ENCODE measurements at regions of chr16 and their contacts with region 1.

Region 1: DNA sequence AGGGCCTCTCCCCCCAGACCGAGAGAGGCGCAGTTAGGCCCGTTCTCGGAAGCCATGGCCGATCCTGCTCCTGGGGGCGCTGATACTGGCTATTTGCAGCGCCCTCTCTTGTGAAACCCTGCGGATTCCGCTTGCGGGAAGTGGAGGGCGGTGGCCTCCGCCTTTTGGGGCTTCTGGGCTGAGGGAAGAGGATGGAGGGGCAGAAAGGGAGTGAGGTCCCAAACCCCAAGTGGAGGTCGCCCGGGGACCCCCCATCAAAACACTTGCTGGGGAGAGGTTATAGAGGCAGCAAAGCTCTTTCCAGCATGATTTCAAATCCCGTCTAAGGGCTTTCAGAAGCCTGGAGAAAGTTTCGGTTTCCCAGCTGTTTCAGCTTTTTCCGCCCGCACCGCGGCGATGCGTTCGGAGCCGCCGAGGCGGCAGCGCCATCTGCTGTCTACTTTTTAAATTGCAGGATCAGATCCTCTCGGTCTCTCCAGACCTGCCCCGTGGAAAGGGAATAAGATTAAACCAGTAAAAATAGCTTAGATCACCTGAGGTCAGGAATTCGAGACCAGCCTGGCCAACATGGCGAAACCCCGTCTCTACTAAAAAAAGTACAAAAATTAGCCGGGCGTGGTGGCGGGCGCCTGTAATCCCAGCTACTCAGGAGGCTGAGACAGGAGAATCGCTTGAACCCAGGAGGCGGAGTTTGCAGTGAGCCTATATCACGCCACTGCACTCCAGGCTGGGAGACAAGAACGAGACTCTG is 15.8 kb downstream of the SNX20 start:
- DNase-seq: no peak
- ATAC-seq: peak; percentile 68
- H3K4me3 ChIP-seq: no peak overlapping the region
- H3K27ac ChIP-seq: no peak overlapping the region
- H3K4me1 ChIP-seq: peaks cover 19% of the 10 kb centered on the region
- H3K27me3 ChIP-seq: no peaks in the 10 kb centered on the region
- CTCF ChIP-seq: peak; percentile 77 to 91 (median 86)
- EP300 ChIP-seq: no peak
- POLR2A ChIP-seq: no peak
- RAD21 ChIP-seq: peak; percentile 83

Region 2: DNA sequence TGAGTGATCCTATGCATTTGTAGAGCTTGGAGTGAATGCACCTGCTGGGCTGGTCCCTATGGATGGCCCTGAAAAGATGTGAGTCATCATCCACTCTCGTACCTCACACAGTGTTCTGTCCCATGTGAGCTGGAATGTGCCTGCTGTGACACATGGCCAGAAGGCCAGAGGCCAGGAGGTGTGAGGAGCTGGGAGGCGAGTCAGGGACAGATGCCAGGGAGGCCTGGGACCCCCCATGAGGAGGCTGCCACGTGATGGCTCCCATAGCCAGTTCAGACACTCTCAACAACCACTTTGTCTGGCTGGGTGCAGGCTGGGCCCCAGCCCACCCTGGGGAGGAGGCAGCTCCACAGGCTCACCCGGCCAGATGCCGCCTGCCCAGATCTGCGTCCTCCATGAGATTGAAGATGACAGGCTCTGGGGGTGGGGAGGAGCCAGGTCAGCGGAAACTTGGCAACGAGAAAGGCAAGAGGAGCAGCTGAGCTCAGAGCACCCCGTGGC is 1122.9 kb before region 1 on chr16:
- CTCF ChIA-PET with region 1: no interaction called
- POLR2A ChIA-PET with region 1: no interaction called
- RAD21 ChIA-PET with region 1: no interaction called
- SMC1A ChIA-PET with region 1: no interaction called
- in situ Hi-C with region 1: no loop called
- intact Hi-C with region 1: no loop called
- DNase-seq: no peak
- ATAC-seq: no peak
- H3K4me3 ChIP-seq: no peak overlapping the region
- H3K27ac ChIP-seq: no peak overlapping the region
- H3K4me1 ChIP-seq: no peaks in the 10 kb centered on the region
- H3K27me3 ChIP-seq: no peaks in the 10 kb centered on the region
- CTCF ChIP-seq: no peak
- EP300 ChIP-seq: no peak
- POLR2A ChIP-seq: no peak
- RAD21 ChIP-seq: no peak

Region 3: DNA sequence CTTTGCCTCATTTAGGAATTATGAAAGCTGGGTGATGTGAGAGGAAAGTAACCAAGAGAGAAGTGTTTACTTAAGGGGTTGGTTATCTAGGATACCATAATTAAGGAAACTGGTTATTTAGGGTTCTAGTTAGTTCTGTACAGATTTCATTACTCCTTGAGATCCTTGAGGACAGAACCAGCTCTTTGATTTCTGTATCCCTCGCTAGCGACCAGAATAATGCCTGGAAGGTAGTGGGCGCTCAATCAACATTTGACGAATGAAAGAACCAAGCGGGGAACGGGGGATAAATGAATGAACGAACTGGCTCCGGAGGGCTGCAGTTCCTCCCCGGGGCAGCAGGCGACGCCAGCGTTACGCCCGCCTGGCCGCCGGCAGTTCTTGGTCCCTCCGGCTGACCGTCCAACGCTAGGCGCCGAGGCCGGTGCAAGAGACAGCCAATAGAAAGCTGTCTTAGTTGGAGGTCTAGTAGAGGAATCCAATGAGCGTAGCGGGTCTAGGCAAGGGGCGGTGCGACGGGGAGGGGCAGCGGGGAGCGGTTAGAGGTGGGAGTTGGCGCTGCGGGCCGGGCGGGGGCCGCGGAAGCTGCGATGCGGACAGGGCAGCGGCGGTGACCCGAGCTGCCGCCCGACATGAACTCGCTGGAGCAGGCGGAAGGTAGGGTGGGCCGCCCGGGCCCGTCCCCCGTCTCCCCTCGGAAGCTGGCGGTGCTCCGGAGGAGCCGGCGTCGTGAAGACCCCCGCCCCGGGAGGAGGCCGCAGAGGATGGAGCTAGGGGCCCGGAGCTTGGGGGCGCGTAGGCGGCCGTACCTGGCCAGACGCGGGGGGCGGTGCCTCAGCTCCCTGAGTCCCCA is 640.4 kb before region 1 on chr16 and contains the start of gene CNEP1R1:
- CTCF ChIA-PET with region 1: interaction called, 14 read pairs
- POLR2A ChIA-PET with region 1: no interaction called
- RAD21 ChIA-PET with region 1: interaction called, 9 read pairs
- SMC1A ChIA-PET with region 1: interaction called, 3 read pairs
- in situ Hi-C with region 1: no loop called
- intact Hi-C with region 1: no loop called
- DNase-seq: peak; percentile 93
- ATAC-seq: peak; percentile 98
- H3K4me3 ChIP-seq: peak within 1 kb of the TSS; percentile 76
- H3K27ac ChIP-seq: peak within 1 kb of the TSS; percentile 64
- H3K4me1 ChIP-seq: 0 out of 2 replicates have a peak, but pooled peaks cover 3% of the 10 kb centered on the region
- H3K27me3 ChIP-seq: no peaks in the 10 kb centered on the region
- CTCF ChIP-seq: peak; percentile 100; a peak in 5 of 6 replicates
- EP300 ChIP-seq: no peak
- POLR2A ChIP-seq: peak; percentile 84
- RAD21 ChIP-seq: peak; percentile 82
- polyA plus RNA-seq, gene CNEP1R1: 11.5 to 15.7 TPM

Region 4: GRCh38 chr16:50360033-50360778 is 305.1 kb before region 1 on chr16:
- CTCF ChIA-PET with region 1: interaction called, 41 read pairs
- POLR2A ChIA-PET with region 1: no interaction called
- RAD21 ChIA-PET with region 1: interaction called, 7 read pairs
- SMC1A ChIA-PET with region 1: interaction called, 11 read pairs
- in situ Hi-C with region 1: no loop called
- intact Hi-C with region 1: no loop called
- DNase-seq: no peak
- ATAC-seq: peak; percentile 20; the same call in 2 of the 3 replicates
- H3K4me3 ChIP-seq: no peak overlapping the region
- H3K27ac ChIP-seq: no peak overlapping the region
- H3K4me1 ChIP-seq: no peaks in the 10 kb centered on the region
- H3K27me3 ChIP-seq: no peaks in the 10 kb centered on the region
- CTCF ChIP-seq: no peak
- EP300 ChIP-seq: no peak
- POLR2A ChIP-seq: no peak
- RAD21 ChIP-seq: no peak

Region 5: DNA sequence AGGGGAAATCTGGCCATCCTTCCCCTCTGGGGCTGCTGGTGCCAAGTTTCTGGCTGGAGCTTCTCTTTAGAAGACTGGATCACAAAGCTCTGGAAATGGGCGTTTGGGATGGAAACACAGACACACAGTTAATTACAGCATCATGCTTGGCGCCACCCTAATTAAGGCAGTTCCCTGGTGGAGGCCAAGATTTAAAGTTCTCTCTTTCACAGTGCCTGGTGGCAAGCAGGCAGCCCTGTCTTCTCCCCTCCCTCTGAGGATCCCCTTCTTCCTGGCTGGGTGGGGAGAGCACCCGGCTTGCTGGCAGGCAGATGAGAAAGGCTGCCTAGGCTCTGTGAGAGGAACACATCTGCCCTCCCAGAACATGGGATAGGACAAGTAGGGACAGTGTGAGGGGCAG is 176.1 kb before region 1 on chr16:
- CTCF ChIA-PET with region 1: no interaction called
- POLR2A ChIA-PET with region 1: no interaction called
- RAD21 ChIA-PET with region 1: no interaction called
- SMC1A ChIA-PET with region 1: no interaction called
- in situ Hi-C with region 1: no loop called
- intact Hi-C with region 1: no loop called
- DNase-seq: no peak
- ATAC-seq: no peak
- H3K4me3 ChIP-seq: no peak overlapping the region
- H3K27ac ChIP-seq: no peak overlapping the region
- H3K4me1 ChIP-seq: no peaks in the 10 kb centered on the region
- H3K27me3 ChIP-seq: no peaks in the 10 kb centered on the region
- CTCF ChIP-seq: no peak
- EP300 ChIP-seq: no peak
- POLR2A ChIP-seq: no peak
- RAD21 ChIP-seq: no peak

Region 6: GRCh38 chr16:50548125-50548908 is 117.0 kb before region 1 on chr16 and contains the start of gene NKD1:
- CTCF ChIA-PET with region 1: interaction called, 5 read pairs
- POLR2A ChIA-PET with region 1: no interaction called
- RAD21 ChIA-PET with region 1: no interaction called
- SMC1A ChIA-PET with region 1: interaction called, 4 read pairs
- in situ Hi-C with region 1: no loop called
- intact Hi-C with region 1: loop called (anchors 5 kb)
- DNase-seq: no peak
- ATAC-seq: peak; percentile 93
- H3K4me3 ChIP-seq: peak within 1 kb of the TSS; percentile 83
- H3K27ac ChIP-seq: no peak within 1 kb of the TSS
- H3K4me1 ChIP-seq: no peaks in the 10 kb centered on the region
- H3K27me3 ChIP-seq: peaks cover 3 to 4% of the 10 kb centered on the region in 2 experiments; a peak in 3 of 4 replicates
- CTCF ChIP-seq: no peak
- EP300 ChIP-seq: no peak
- POLR2A ChIP-seq: peak; percentile 59
- RAD21 ChIP-seq: no peak
- polyA plus RNA-seq, gene NKD1: under 0.01 TPM in 1 of 2 experiments, not detected in the other

Region 7: GRCh38 chr16:50696575-50697420 is 31.5 kb after region 1 on chr16:
- CTCF ChIA-PET with region 1: interaction called, 86 read pairs
- POLR2A ChIA-PET with region 1: interaction called, 9 read pairs
- RAD21 ChIA-PET with region 1: interaction called, 28 read pairs
- SMC1A ChIA-PET with region 1: interaction called, 42 read pairs
- in situ Hi-C with region 1: no loop called
- intact Hi-C with region 1: no loop called
- DNase-seq: peak; percentile 82
- ATAC-seq: peak; percentile 76
- H3K4me3 ChIP-seq: peak overlapping the region; percentile 72; the same call in 1 of the 2 replicates
- H3K27ac ChIP-seq: peak overlapping the region; percentile 95
- H3K4me1 ChIP-seq: peaks cover 57% of the 10 kb centered on the region
- H3K27me3 ChIP-seq: no peaks in the 10 kb centered on the region
- CTCF ChIP-seq: no peak
- EP300 ChIP-seq: peak in 1 of 2 experiments; percentile 30; a peak in 2 of 4 replicates
- POLR2A ChIP-seq: 0 out of 2 replicates have a peak, but pooled peaks have one; percentile 47
- RAD21 ChIP-seq: no peak

Region 8: GRCh38 chr16:50747207-50747956 is 82.1 kb after region 1 on chr16:
- CTCF ChIA-PET with region 1: interaction called, 636 read pairs
- POLR2A ChIA-PET with region 1: interaction called, 10 read pairs
- RAD21 ChIA-PET with region 1: interaction called, 578 read pairs
- SMC1A ChIA-PET with region 1: interaction called, 600 read pairs
- in situ Hi-C with region 1: no loop called
- intact Hi-C with region 1: loop called (anchors 1 kb)
- DNase-seq: peak; percentile 57
- ATAC-seq: peak; percentile 73
- H3K4me3 ChIP-seq: peak overlapping the region; percentile 62; the same call in 1 of the 2 replicates
- H3K27ac ChIP-seq: peak overlapping the region; percentile 75
- H3K4me1 ChIP-seq: peaks cover 20% of the 10 kb centered on the region
- H3K27me3 ChIP-seq: no peaks in the 10 kb centered on the region
- CTCF ChIP-seq: peak; percentile 37 to 68 (median 59); a peak in 5 of 6 replicates
- EP300 ChIP-seq: no peak
- POLR2A ChIP-seq: no peak
- RAD21 ChIP-seq: peak; percentile 79

Measured in GM12878 (cell line).